ENCODE measurements at regions of chr20 and their contacts with region 1.

Region 1: DNA sequence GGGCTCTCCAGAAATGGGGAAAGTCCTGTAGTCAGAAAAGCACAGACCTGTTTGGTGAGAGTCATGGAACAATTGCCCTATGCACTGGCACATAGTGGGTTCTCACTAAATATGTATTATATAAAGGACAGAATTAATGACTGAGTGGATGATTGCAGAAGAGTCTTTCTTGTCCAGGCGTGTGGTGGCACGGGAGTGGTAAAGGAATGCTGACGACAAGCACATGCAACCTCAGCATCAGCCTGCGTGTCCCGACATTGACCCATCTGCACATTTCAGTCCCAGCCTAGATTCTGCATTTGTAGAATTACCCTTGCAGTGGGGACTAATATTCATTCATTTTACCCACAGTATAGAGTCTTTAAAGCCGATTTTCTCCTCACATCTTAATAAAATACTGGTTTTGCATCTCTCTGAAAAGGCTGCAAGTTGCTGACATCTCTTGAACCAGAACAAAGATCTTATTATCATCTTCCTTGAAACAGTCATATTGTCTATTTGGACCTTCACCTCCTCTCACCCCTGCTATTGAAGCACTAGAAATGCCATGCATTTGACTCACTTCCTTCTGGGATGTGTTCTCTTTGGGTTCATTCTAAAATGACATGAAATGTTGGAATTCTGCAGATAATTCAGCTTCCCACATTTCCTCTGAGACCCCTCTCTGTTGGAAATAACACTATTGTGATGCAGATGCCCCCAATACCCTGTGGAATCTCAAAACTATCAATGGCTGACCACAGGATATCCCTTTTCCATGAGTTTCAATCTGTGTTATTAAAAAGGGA is 883.6 kb upstream of the FLRT3 start:
- DNase-seq: no peak
- H3K4me3 ChIP-seq: no peak overlapping the region
- H3K27ac ChIP-seq: no peak overlapping the region
- H3K4me1 ChIP-seq: no peaks in the 10 kb centered on the region
- H3K27me3 ChIP-seq: no peaks in the 10 kb centered on the region
- CTCF ChIP-seq: no peak
- POLR2A ChIP-seq: no peak

Region 2: GRCh38 chr20:15171016-15171415 is 50.0 kb before region 1 on chr20:
- intact Hi-C with region 1: no loop called
- DNase-seq: no peak
- H3K4me3 ChIP-seq: no peak overlapping the region
- H3K27ac ChIP-seq: no peak overlapping the region
- H3K4me1 ChIP-seq: no peaks in the 10 kb centered on the region
- H3K27me3 ChIP-seq: no peaks in the 10 kb centered on the region
- CTCF ChIP-seq: no peak
- POLR2A ChIP-seq: no peak

Region 3: GRCh38 chr20:15288106-15288505 is 67.1 kb after region 1 on chr20:
- intact Hi-C with region 1: loop called (anchors 10 kb)
- DNase-seq: no peak
- H3K4me3 ChIP-seq: no peak overlapping the region
- H3K27ac ChIP-seq: no peak overlapping the region
- H3K4me1 ChIP-seq: peaks cover 6 to 17% of the 10 kb centered on the region in 2 donors
- H3K27me3 ChIP-seq: no peaks in the 10 kb centered on the region
- CTCF ChIP-seq: no peak
- POLR2A ChIP-seq: no peak